Right cardiac atrium (tissue), 5 donors: ENCODE measurements at regions of chr1 and their contacts with region 1.

Region 1: DNA sequence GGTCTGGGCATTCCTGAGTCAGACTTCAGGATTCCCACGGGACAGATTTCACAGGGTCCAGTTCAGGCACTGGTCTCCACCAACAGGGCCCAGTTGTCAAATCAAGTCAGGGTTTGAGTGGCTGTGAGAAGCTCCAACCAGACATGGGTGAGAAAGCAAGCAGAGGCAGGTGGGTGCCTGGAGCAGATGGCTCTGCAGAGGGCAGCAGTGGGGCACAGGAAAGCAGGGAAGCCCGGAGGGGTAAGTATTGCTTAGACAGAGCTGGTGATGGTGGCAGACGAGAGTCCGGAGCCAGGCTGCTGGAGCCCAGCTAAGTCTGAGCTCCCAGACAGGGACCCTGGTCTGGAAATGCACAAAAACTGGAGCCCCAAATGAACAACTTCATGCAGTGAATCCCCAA is 40.4 kb downstream of the RIMS3 start:
- DNase-seq: peak; percentile 31 to 69 (median 61)
- ATAC-seq: peak; percentile 56 to 60
- H3K4me3 ChIP-seq: no peak overlapping the region
- H3K27ac ChIP-seq: no peak overlapping the region
- H3K4me1 ChIP-seq: no peaks in the 10 kb centered on the region
- H3K27me3 ChIP-seq: no peaks in the 10 kb centered on the region

Region 2: GRCh38 chr1:40668769-40669525 is 43.9 kb after region 1 on chr1:
- intact Hi-C with region 1: loop called in 2 of 4 experiments (anchors 5 kb)
- DNase-seq: peak; percentile 73 to 90 (median 89)
- ATAC-seq: peak; percentile 34 to 40
- H3K4me3 ChIP-seq: no peak overlapping the region
- H3K27ac ChIP-seq: no peak overlapping the region
- H3K4me1 ChIP-seq: peaks cover 5% of the 10 kb centered on the region
- H3K27me3 ChIP-seq: no peaks in the 10 kb centered on the region

Region 3: GRCh38 chr1:40849801-40850592 is 224.9 kb after region 1 on chr1:
- intact Hi-C with region 1: loop called in 1 of 4 experiments (anchors 10 kb)
- DNase-seq: peak; percentile 64 to 87 (median 85)
- ATAC-seq: peak; percentile 77 to 79
- H3K4me3 ChIP-seq: no peak overlapping the region
- H3K27ac ChIP-seq: no peak overlapping the region
- H3K4me1 ChIP-seq: no peaks in the 10 kb centered on the region
- H3K27me3 ChIP-seq: no peaks in the 10 kb centered on the region